Endothelial cell of umbilical vein (primary cell): ENCODE measurements at regions of chr20 and their contacts with region 1.

Region 1: GRCh38 chr20:54199721-54200176 is 8.1 kb upstream of the PFDN4 start:
- DNase-seq: peak; percentile 77
- H3K4me3 ChIP-seq: no peak overlapping the region
- H3K27ac ChIP-seq: no peak overlapping the region
- H3K4me1 ChIP-seq: no peaks in the 10 kb centered on the region
- H3K27me3 ChIP-seq: no peaks in the 10 kb centered on the region
- CTCF ChIP-seq: peak; percentile 80 to 84
- POLR2A ChIP-seq: no peak

Region 2: GRCh38 chr20:53493311-53493864 is 706.4 kb before region 1 on chr20:
- CTCF ChIA-PET with region 1: no interaction called
- POLR2A ChIA-PET with region 1: no interaction called
- dilution Hi-C with region 1: no loop called
- intact Hi-C with region 1: no loop called
- DNase-seq: no peak
- H3K4me3 ChIP-seq: no peak overlapping the region
- H3K27ac ChIP-seq: no peak overlapping the region
- H3K4me1 ChIP-seq: no peaks in the 10 kb centered on the region
- H3K27me3 ChIP-seq: no peaks in the 10 kb centered on the region
- CTCF ChIP-seq: no peak
- POLR2A ChIP-seq: no peak

Region 3: GRCh38 chr20:54093423-54094267 is 106.1 kb before region 1 on chr20:
- CTCF ChIA-PET with region 1: interaction called, 116 read pairs
- POLR2A ChIA-PET with region 1: no interaction called
- dilution Hi-C with region 1: no loop called
- intact Hi-C with region 1: loop called (anchors 1 kb)
- DNase-seq: no peak
- H3K4me3 ChIP-seq: no peak overlapping the region
- H3K27ac ChIP-seq: no peak overlapping the region
- H3K4me1 ChIP-seq: no peaks in the 10 kb centered on the region
- H3K27me3 ChIP-seq: no peaks in the 10 kb centered on the region
- CTCF ChIP-seq: no peak
- POLR2A ChIP-seq: no peak

Region 4: DNA sequence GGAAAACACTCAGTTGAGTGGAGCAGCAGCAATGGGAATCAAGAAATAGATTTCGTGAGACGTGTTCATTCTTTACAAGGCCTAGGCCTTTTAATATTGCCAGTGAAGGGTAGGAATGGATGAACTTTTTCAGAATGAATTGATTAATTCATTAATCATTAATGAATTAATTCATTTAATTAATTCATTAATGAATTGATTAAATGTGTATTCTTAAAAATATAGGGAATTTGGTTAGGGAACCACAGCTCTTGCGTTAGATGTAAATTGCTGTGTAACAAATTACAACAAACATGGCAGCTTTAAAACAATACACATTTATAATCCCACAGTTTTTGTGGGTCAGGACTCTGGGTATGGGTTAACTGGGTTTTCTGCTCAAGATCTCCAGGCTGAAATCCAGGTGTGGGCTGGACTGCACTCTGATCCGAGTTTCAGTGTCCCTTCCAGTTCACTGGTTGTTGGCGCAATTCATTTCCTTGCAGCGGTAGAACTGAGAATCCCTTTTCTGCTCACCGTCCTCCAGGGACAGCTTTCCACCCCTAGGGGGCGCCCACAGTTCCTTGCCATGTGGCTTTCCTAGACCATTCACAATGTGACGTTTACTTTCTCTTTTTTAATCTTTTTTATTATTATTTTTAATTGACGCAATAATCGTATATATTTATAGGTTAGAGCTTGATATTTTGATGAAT is 96.5 kb before region 1 on chr20:
- CTCF ChIA-PET with region 1: interaction called, 116 read pairs
- POLR2A ChIA-PET with region 1: no interaction called
- dilution Hi-C with region 1: no loop called
- intact Hi-C with region 1: loop called (anchors 1 kb)
- DNase-seq: peak; percentile 49
- H3K4me3 ChIP-seq: no peak overlapping the region
- H3K27ac ChIP-seq: no peak overlapping the region
- H3K4me1 ChIP-seq: no peaks in the 10 kb centered on the region
- H3K27me3 ChIP-seq: peaks cover 0 to 3% of the 10 kb centered on the region in 2 experiments
- CTCF ChIP-seq: peak; percentile 88 to 90
- POLR2A ChIP-seq: no peak